ENCODE measurements at regions of chr19 and their contacts with region 1.

Region 1: DNA sequence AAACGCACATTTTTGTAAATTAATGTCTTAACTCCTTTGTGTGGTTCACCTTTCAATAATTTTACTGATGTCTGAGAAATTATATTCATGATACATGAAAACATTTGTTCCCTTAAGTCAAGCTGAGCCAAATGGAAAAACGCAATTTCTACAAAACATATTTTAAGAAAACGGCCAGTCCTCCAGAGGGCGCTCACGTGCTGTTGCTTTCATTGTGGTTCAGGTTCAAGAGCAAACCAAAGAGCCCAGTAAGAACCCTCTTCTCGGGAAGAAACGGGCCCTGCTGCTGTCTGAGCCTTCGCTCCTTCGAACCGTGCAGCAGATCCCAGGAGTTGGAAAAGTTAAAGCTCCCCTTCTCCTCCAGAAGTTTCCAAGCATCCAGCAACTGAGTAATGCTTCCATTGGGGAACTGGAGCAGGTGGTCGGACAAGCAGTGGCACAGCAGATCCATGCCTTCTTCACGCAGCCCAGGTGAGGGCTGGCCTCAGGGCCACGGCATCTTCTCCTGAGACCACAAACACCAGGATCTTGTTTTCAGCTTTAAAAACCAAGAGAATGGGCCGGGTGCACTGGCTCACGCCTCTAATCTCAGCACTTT is 4.3 kb downstream of the FAAP24 start:
- DNase-seq: peak in 1 of 2 donors; percentile 47
- H3K4me3 ChIP-seq: no peak overlapping the region
- H3K27ac ChIP-seq: no peak overlapping the region
- H3K4me1 ChIP-seq: peaks cover 0 to 2% (median under 1%) of the 10 kb centered on the region in 4 donors
- H3K27me3 ChIP-seq: no peaks in the 10 kb centered on the region
- CTCF ChIP-seq: peak; percentile 13 to 37

Region 2: GRCh38 chr19:33085570-33086128 is 109.3 kb after region 1 on chr19:
- intact Hi-C with region 1: loop called (anchors 2 kb)
- DNase-seq: no peak
- H3K4me3 ChIP-seq: no peak overlapping the region
- H3K27ac ChIP-seq: no peak overlapping the region
- H3K4me1 ChIP-seq: peaks cover 0 to 16% (median 12%) of the 10 kb centered on the region in 4 donors
- H3K27me3 ChIP-seq: no peaks in the 10 kb centered on the region
- CTCF ChIP-seq: no peak